CD4-positive, alpha-beta T cell (primary cell): ENCODE measurements at regions of chr6 and their contacts with region 1.

Region 1: GRCh38 chr6:32952817-32953739 is at the start of gene HLA-DMA:
- DNase-seq: peak; percentile 57 to 92 (median 70)
- ATAC-seq: peak; percentile 98
- H3K4me3 ChIP-seq: peak within 1 kb of the TSS; percentile 49
- H3K4me3 Mint-ChIP-seq: peak within 1 kb of the TSS; percentile 71
- H3K27ac ChIP-seq: peak within 1 kb of the TSS; percentile 5 to 44
- H3K27ac Mint-ChIP-seq: peak within 1 kb of the TSS; percentile 82
- H3K4me1 ChIP-seq: peaks cover 26% of the 10 kb centered on the region
- H3K4me1 Mint-ChIP-seq: peaks cover 45% of the 10 kb centered on the region
- H3K27me3 ChIP-seq: no peaks in the 10 kb centered on the region
- H3K27me3 Mint-ChIP-seq: no peaks in the 10 kb centered on the region
- CTCF ChIP-seq: peak; percentile 86
- total RNA-seq, gene HLA-DMA: 14.4 to 16.5 TPM

Region 2: GRCh38 chr6:32195902-32196681 is 757.0 kb before region 1 on chr6:
- CTCF ChIA-PET with region 1: no interaction called
- POLR2A ChIA-PET with region 1: no interaction called
- intact Hi-C with region 1: no loop called
- DNase-seq: peak in 12 of 14 experiments; percentile 35 to 100 (median 47)
- ATAC-seq: peak; percentile 73
- H3K4me3 ChIP-seq: peak overlapping the region; percentile 100
- H3K4me3 Mint-ChIP-seq: peak overlapping the region; percentile 99
- H3K27ac ChIP-seq: peak overlapping the region; percentile 87 to 100
- H3K27ac Mint-ChIP-seq: peak overlapping the region; percentile 96
- H3K4me1 ChIP-seq: peaks cover 48% of the 10 kb centered on the region
- H3K4me1 Mint-ChIP-seq: peaks cover 48% of the 10 kb centered on the region
- H3K27me3 ChIP-seq: no peaks in the 10 kb centered on the region
- H3K27me3 Mint-ChIP-seq: no peaks in the 10 kb centered on the region
- CTCF ChIP-seq: peak; percentile 8

Region 3: DNA sequence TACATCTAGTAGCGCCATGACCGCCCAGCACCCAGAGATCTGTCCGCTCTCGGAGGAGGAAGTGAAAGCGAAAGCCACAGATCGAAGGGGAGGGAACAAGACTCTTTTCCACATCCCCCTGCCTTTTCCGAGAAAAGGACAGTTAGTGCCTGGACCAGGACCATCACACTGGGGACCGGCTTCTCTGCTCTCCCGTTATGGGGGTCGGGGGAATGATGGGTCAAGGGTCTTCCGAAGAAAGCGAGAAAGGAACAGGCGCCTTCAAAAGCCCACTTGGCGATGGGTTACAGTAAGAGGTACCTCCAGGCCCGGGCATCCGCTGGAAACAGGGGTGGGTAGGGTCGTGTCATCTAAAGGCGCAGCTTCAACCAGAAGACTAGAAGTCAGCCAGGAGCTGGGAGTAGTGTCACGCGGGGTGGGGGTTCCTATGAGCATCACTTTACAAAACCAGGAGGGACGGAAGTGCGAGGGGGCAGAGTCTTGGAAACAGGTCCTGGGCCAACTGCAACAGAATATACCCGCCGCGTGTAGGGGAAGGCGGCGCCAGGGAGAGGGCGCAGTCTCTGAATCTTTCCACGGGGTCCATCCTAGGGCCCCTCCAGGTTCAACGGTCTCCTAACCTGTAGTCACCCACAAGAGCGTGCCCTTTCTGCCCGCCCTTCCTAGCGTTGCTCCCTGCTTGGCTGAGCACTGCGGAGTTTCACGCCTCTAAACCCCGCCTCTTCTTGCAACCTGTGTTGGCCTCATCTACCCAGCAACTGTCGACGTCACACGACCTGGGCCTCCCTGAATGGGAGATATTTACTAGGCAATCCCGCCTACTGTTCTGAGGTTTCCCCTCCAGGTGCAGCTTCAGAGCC is 108.9 kb before region 1 on chr6 and contains the start of gene PSMB8:
- CTCF ChIA-PET with region 1: interaction called, 21 read pairs
- POLR2A ChIA-PET with region 1: interaction called, 19 read pairs
- intact Hi-C with region 1: no loop called
- DNase-seq: peak; percentile 94 to 99 (median 98)
- ATAC-seq: peak; percentile 79
- H3K4me3 ChIP-seq: peak within 1 kb of the TSS; percentile 94
- H3K4me3 Mint-ChIP-seq: peak within 1 kb of the TSS; percentile 97
- H3K27ac ChIP-seq: peak within 1 kb of the TSS; percentile 99 to 100
- H3K27ac Mint-ChIP-seq: peak within 1 kb of the TSS; percentile 99
- H3K4me1 ChIP-seq: peaks cover 73% of the 10 kb centered on the region
- H3K4me1 Mint-ChIP-seq: peaks cover 96% of the 10 kb centered on the region
- H3K27me3 ChIP-seq: no peaks in the 10 kb centered on the region
- H3K27me3 Mint-ChIP-seq: no peaks in the 10 kb centered on the region
- CTCF ChIP-seq: no peak
- total RNA-seq, gene PSMB8: 120 to 121 TPM

Region 4: GRCh38 chr6:32894080-32895005 is 58.7 kb before region 1 on chr6:
- CTCF ChIA-PET with region 1: interaction called, 6 read pairs
- POLR2A ChIA-PET with region 1: interaction called, 14 read pairs
- intact Hi-C with region 1: no loop called
- DNase-seq: peak; percentile 88 to 97 (median 94)
- ATAC-seq: peak; percentile 98
- H3K4me3 ChIP-seq: peak overlapping the region; percentile 89
- H3K4me3 Mint-ChIP-seq: peak overlapping the region; percentile 100
- H3K27ac ChIP-seq: peak overlapping the region; percentile 75 to 85
- H3K27ac Mint-ChIP-seq: peak overlapping the region; percentile 91
- H3K4me1 ChIP-seq: peaks cover 22% of the 10 kb centered on the region
- H3K4me1 Mint-ChIP-seq: peaks cover 45% of the 10 kb centered on the region
- H3K27me3 ChIP-seq: no peaks in the 10 kb centered on the region
- H3K27me3 Mint-ChIP-seq: no peaks in the 10 kb centered on the region
- CTCF ChIP-seq: no peak

Region 5: DNA sequence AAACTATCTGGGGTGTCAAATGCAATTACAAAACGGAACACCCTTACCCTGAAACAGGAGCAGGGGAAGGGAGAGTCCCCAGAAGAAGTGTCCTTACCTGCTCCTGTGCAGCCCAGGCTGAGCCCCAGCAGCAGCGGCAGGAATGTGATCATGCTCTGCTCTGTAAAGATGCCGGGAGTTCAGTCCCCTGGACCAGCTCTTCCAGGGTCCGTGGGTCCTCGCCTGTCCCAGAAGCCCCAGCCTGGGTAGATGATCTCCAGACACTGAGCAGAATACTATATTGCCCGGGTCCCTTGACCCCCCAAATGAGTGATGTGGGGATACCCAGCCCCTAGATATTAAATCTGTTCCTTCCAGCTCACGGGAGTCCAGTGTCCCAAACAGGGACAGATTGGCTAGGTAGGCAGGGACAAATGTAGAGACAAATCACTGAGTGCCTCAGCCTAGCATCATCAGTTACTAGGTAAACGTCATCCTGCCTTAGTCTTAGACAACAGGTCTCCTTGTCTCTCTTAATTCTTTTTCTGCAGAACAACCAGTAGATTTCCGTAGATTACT is 12.3 kb before region 1 on chr6 and contains the start of gene HLA-DMB:
- CTCF ChIA-PET with region 1: interaction called, 65 read pairs
- POLR2A ChIA-PET with region 1: interaction called, 64 read pairs
- intact Hi-C with region 1: loop called (anchors 1 kb)
- DNase-seq: peak in 10 of 14 experiments; percentile 15 to 89 (median 42)
- ATAC-seq: peak; percentile 85
- H3K4me3 ChIP-seq: peak within 1 kb of the TSS; percentile 72
- H3K4me3 Mint-ChIP-seq: peak within 1 kb of the TSS; percentile 96
- H3K27ac ChIP-seq: peak within 1 kb of the TSS; percentile 86 to 89
- H3K27ac Mint-ChIP-seq: peak within 1 kb of the TSS; percentile 99
- H3K4me1 ChIP-seq: peaks cover 58% of the 10 kb centered on the region
- H3K4me1 Mint-ChIP-seq: peaks cover 60% of the 10 kb centered on the region
- H3K27me3 ChIP-seq: no peaks in the 10 kb centered on the region
- H3K27me3 Mint-ChIP-seq: no peaks in the 10 kb centered on the region
- CTCF ChIP-seq: no peak
- total RNA-seq, gene HLA-DMB: 4.6 to 6.0 TPM

Region 6: GRCh38 chr6:32984605-32985389 is 31.7 kb after region 1 on chr6:
- CTCF ChIA-PET with region 1: interaction called, 72 read pairs
- POLR2A ChIA-PET with region 1: interaction called, 30 read pairs
- intact Hi-C with region 1: loop called (anchors 1 to 2 kb)
- DNase-seq: peak; percentile 83 to 97 (median 89)
- ATAC-seq: peak; percentile 98
- H3K4me3 ChIP-seq: no peak overlapping the region
- H3K4me3 Mint-ChIP-seq: no peak overlapping the region
- H3K27ac ChIP-seq: no peak overlapping the region
- H3K27ac Mint-ChIP-seq: peak overlapping the region; percentile 43
- H3K4me1 ChIP-seq: peaks cover 18% of the 10 kb centered on the region
- H3K4me1 Mint-ChIP-seq: peaks cover 28% of the 10 kb centered on the region
- H3K27me3 ChIP-seq: no peaks in the 10 kb centered on the region
- H3K27me3 Mint-ChIP-seq: no peaks in the 10 kb centered on the region
- CTCF ChIP-seq: peak; percentile 83

Region 7: DNA sequence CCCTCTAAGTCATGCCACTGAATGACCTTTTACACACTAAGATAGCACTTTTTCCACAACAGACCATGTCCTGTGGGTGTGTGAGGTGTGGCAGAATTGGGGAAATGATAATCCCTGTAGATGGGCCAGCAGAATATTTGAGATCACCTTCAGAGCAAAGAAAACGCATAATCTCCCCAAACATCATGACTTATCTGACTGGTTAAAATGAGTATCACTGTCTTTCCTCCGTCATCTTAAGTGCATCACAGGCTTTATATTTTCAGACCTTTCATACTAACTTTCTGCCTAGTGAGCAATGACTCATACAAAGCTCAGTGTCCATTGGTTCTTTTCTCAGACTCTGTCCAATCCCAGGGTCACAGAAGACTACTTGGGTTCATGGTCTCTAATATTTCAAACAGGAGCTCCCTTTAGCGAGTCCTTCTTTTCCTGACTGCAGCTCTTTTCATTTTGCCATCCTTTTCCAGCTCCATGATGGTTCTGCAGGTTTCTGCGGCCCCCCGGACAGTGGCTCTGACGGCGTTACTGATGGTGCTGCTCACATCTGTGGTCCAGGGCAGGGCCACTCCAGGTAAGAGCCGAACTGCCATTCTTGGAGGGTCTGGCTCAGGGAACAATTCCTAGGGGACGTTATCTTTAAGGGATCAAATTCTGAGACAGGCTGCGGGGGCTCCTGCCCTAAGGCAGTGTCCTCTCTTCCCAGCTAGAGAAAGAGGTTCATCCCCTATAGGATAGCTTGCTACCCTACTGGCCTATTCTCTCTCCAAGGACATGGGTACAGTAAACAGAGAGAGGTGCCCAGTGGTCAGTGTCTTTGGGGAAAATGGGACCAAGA is 122.7 kb after region 1 on chr6 and contains the start of gene HLA-DPB1:
- CTCF ChIA-PET with region 1: no interaction called
- POLR2A ChIA-PET with region 1: no interaction called
- intact Hi-C with region 1: no loop called
- DNase-seq: peak in 4 of 14 experiments; percentile 23 to 88 (median 86)
- ATAC-seq: peak; percentile 93
- H3K4me3 ChIP-seq: peak within 1 kb of the TSS; percentile 81
- H3K4me3 Mint-ChIP-seq: peak within 1 kb of the TSS; percentile 90
- H3K27ac ChIP-seq: peak within 1 kb of the TSS in 1 of 2 donors; percentile 68
- H3K27ac Mint-ChIP-seq: peak within 1 kb of the TSS; percentile 90
- H3K4me1 ChIP-seq: peaks cover 39% of the 10 kb centered on the region
- H3K4me1 Mint-ChIP-seq: peaks cover 59% of the 10 kb centered on the region
- H3K27me3 ChIP-seq: no peaks in the 10 kb centered on the region
- H3K27me3 Mint-ChIP-seq: peaks cover 12% of the 10 kb centered on the region
- CTCF ChIP-seq: no peak
- total RNA-seq, gene HLA-DPB1: 29.0 to 31.7 TPM

Region 8: GRCh38 chr6:33299237-33299944 is 346.3 kb after region 1 on chr6:
- CTCF ChIA-PET with region 1: no interaction called
- POLR2A ChIA-PET with region 1: no interaction called
- intact Hi-C with region 1: no loop called
- DNase-seq: peak; percentile 89 to 97 (median 92)
- ATAC-seq: peak; percentile 84
- H3K4me3 ChIP-seq: peak overlapping the region; percentile 91
- H3K4me3 Mint-ChIP-seq: peak overlapping the region; percentile 98
- H3K27ac ChIP-seq: peak overlapping the region; percentile 90 to 96
- H3K27ac Mint-ChIP-seq: peak overlapping the region; percentile 99
- H3K4me1 ChIP-seq: peaks cover 34% of the 10 kb centered on the region
- H3K4me1 Mint-ChIP-seq: peaks cover 32% of the 10 kb centered on the region
- H3K27me3 ChIP-seq: no peaks in the 10 kb centered on the region
- H3K27me3 Mint-ChIP-seq: no peaks in the 10 kb centered on the region
- CTCF ChIP-seq: peak; percentile 74